Upper lobe of right lung (tissue), 1 donor: ENCODE measurements at regions of chr3 and their contacts with region 1.

Region 1: DNA sequence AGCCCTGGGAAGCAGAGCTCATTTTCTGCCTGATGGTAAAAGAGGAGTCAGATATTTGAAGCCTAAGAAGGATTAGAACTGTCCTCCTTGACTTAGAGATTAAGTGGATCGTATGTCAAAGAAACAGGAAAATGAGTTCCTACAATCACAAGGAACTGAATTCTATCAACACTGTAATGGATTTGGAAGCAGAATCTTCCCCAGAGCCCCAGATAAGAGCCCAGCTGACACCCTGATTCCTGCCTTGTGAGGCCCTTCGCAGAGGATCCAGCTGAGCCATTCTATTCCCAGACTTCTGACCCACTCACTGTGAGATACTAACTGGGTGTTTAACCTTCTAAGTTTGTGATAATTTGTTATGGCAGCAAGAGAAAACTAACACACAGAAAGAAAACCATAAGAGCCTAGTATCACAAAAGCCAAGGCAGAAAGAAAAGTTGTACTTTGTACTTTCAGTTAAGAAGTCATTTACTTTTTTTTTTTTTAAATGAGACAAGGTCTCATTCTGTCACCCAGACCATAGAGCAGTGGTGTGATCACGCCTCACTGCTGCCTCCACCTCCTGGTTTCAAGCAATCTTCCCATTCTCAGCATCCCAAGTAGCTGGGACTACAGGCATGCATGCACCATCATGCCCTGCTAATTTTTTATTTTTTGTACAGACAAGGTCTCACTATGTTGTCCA is 61.1 kb upstream of the ZBTB20 start:
- DNase-seq: no peak
- ATAC-seq: no peak
- H3K4me3 ChIP-seq: no peak overlapping the region
- H3K27ac ChIP-seq: no peak overlapping the region
- H3K4me1 ChIP-seq: no peaks in the 10 kb centered on the region
- H3K27me3 ChIP-seq: no peaks in the 10 kb centered on the region
- CTCF ChIP-seq: no peak

Region 2: DNA sequence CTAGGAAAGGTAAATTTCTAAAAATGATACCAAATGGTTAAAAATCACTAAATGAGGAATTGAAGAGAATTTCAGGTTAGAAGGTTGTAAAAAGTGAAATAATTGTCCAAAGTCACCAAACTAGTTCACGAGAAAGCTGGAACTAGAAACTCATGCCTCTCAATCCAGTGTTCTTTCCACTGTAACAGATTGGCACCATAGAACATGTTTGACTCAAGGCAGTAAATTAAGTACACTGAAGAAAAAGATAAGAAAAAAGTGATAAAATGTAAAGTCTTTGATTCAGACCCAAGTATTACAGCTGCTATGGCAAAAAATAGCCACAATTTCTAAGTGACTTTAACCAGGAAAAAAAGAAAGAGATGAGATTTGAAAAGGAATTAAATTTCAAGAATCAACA is 87.6 kb before region 1 on chr3:
- intact Hi-C with region 1: no loop called
- DNase-seq: no peak
- ATAC-seq: no peak
- H3K4me3 ChIP-seq: no peak overlapping the region
- H3K27ac ChIP-seq: no peak overlapping the region
- H3K4me1 ChIP-seq: no peaks in the 10 kb centered on the region
- H3K27me3 ChIP-seq: no peaks in the 10 kb centered on the region
- CTCF ChIP-seq: no peak

Region 3: DNA sequence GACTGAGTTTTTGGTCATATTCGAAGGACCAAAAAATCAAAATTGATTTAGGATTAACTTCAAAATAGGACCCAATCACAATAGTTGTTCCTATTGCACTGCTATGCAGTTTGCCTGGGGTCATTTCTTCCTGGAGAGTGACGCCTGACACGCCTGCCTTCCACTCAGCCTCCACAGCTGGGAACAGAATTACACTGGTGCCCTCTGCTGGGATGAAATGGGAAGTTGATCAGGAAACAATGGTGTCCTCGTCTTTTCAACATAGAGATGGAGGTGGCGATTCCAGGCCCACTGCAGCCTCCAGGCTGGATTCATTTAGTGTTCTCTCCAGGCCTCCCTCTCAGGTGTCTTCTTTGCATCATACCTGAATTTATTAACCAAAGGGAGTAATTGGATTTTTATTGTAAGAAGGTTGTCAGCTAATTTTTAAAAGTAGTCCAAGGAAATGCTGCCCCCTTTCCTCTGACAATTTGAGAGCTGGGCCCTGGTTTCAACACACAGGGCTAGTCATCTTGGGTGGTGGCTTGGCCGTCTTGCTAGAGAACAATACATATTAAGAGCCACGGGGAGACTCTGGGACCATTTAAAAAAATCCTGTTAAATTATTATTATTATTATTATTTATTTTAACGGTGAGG is 484.8 kb after region 1 on chr3:
- intact Hi-C with region 1: loop called (anchors 10 kb)
- DNase-seq: peak; percentile 71
- ATAC-seq: peak; percentile 98
- H3K4me3 ChIP-seq: no peak overlapping the region
- H3K27ac ChIP-seq: no peak overlapping the region
- H3K4me1 ChIP-seq: no peaks in the 10 kb centered on the region
- H3K27me3 ChIP-seq: no peaks in the 10 kb centered on the region
- CTCF ChIP-seq: peak; percentile 87